ENCODE measurements at regions of chr22 and their contacts with region 1.

Region 1: GRCh38 chr22:20016734-20017621 is at the start of gene ARVCF:
- DNase-seq: peak; percentile 91
- H3K4me3 Mint-ChIP-seq: peak within 1 kb of the TSS; percentile 84
- H3K27ac Mint-ChIP-seq: no peak within 1 kb of the TSS
- H3K4me1 Mint-ChIP-seq: peaks cover 15% of the 10 kb centered on the region
- H3K27me3 Mint-ChIP-seq: peaks cover 32% of the 10 kb centered on the region
- total RNA-seq, gene ARVCF: 2.4 and 3.1 TPM in 2 replicates

Region 2: DNA sequence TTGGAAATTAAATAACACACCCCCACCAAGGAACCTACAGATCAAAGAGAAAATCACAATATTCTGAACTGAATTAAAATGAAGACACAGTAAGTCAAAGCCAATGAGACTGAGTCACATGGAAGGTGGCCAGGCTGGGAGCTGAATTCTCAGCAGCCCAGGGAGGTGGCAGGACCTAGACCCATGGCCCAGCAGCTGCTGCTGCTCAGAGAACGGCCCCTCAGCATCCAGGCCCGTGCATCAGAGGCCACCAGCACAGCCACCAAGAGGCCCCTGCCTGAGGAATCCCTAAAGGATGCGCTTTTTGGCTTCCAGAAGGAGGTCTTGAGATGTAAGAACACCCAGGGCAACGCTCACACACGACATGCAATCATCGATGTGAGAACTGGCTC is 221.4 kb before region 1 on chr22:
- intact Hi-C with region 1: no loop called
- DNase-seq: no peak
- H3K4me3 Mint-ChIP-seq: no peak overlapping the region
- H3K27ac Mint-ChIP-seq: no peak overlapping the region
- H3K4me1 Mint-ChIP-seq: no peaks in the 10 kb centered on the region
- H3K27me3 Mint-ChIP-seq: no peaks in the 10 kb centered on the region

Region 3: GRCh38 chr22:19877626-19878339 is 139.2 kb before region 1 on chr22:
- intact Hi-C with region 1: no loop called
- DNase-seq: no peak
- H3K4me3 Mint-ChIP-seq: no peak overlapping the region
- H3K27ac Mint-ChIP-seq: no peak overlapping the region
- H3K4me1 Mint-ChIP-seq: no peaks in the 10 kb centered on the region
- H3K27me3 Mint-ChIP-seq: no peaks in the 10 kb centered on the region

Region 4: GRCh38 chr22:19986410-19987341 is 30.3 kb before region 1 on chr22:
- intact Hi-C with region 1: loop called (anchors 1 kb)
- DNase-seq: peak; percentile 66
- H3K4me3 Mint-ChIP-seq: no peak overlapping the region
- H3K27ac Mint-ChIP-seq: no peak overlapping the region
- H3K4me1 Mint-ChIP-seq: no peaks in the 10 kb centered on the region
- H3K27me3 Mint-ChIP-seq: peaks cover 8% of the 10 kb centered on the region

Region 5: GRCh38 chr22:20033045-20033706 is 16.2 kb after region 1 on chr22:
- intact Hi-C with region 1: no loop called
- DNase-seq: no peak
- H3K4me3 Mint-ChIP-seq: no peak overlapping the region
- H3K27ac Mint-ChIP-seq: no peak overlapping the region
- H3K4me1 Mint-ChIP-seq: peaks cover 4% of the 10 kb centered on the region
- H3K27me3 Mint-ChIP-seq: no peaks in the 10 kb centered on the region

Region 6: GRCh38 chr22:20102203-20102780 is 85.3 kb after region 1 on chr22:
- intact Hi-C with region 1: loop called (anchors 2 kb)
- DNase-seq: no peak
- H3K4me3 Mint-ChIP-seq: peak overlapping the region; percentile 54
- H3K27ac Mint-ChIP-seq: peak overlapping the region; percentile 80
- H3K4me1 Mint-ChIP-seq: peaks cover 62% of the 10 kb centered on the region
- H3K27me3 Mint-ChIP-seq: no peaks in the 10 kb centered on the region

Region 7: DNA sequence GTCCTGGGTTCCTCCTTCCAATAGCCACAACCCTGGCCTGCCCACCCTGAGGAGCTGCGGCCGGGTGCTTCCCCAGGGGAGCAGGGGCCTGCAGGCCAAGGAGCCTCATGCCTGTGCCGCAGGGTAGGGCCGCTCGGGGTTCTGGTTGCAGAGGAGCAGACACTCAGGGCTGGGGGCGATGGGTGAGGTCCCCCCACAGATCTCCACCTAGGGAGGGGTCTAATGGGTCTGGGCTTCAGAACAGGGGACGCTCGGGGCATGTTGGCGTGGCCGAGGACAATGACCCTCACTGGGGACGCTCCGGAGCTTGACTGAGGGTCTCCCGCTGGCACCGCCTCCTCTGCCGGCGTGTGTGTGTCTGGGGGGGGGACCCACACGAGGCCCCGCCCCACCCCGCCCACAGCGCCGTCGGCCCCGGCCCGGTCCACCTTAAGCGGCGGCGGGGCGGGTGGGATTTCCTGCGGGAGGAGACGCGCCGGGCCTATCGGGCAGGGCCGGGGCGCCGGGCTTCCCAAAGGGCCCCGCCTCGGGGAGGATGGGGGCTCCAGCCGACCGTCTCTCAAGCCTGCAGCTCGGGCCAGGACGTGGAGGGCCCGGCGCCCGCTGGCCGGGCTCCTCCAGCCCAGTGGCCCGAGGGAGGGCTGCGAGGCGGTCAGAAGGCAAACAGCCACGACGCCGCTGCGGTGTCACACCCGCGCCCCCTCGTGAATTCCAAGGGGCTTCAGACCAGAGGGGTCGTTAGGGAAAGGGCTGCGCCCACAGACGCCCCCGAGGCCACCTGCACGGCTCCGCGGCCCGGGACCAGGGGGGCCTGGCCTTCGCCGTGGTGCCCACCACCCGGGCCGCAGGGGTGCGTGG is 114.0 kb after region 1 on chr22:
- intact Hi-C with region 1: loop called (anchors 2 kb)
- DNase-seq: peak; percentile 67
- H3K4me3 Mint-ChIP-seq: peak overlapping the region; percentile 59
- H3K27ac Mint-ChIP-seq: peak overlapping the region; percentile 61
- H3K4me1 Mint-ChIP-seq: peaks cover 10% of the 10 kb centered on the region
- H3K27me3 Mint-ChIP-seq: no peaks in the 10 kb centered on the region

Measured in activated T-helper 1 cell treated with anti-CD3 and anti-CD28 coated beads, Interleukin-12 subunit alpha, Interleukin-12 subunit beta, Interleukin-2, Interleukin-4 antibody, amounts not matched to agents 30 ng/mL and 10 ng/mL and 1 ng/mL, durations not matched to agents 14 hours and 24 hours and 36 hours (primary cell).